SK-N-SH (cell line): ENCODE measurements at regions of chr7 and their contacts with region 1.

Region 1: GRCh38 chr7:101321491-101322401 is at the start of gene IFT22:
- DNase-seq: peak; percentile 99
- H3K4me3 ChIP-seq: peak within 1 kb of the TSS; percentile 61 to 78
- H3K27ac ChIP-seq: peak within 1 kb of the TSS; percentile 59 to 81
- H3K4me1 ChIP-seq: peaks cover 0 to 2% of the 10 kb centered on the region in 2 experiments; a peak in 2 of 4 replicates
- H3K27me3 ChIP-seq: no peaks in the 10 kb centered on the region
- CTCF ChIP-seq: peak; percentile 57
- EP300 ChIP-seq: no peak; a peak in 1 of 4 replicates
- RAD21 ChIP-seq: peak; percentile 72
- polyA plus RNA-seq, gene IFT22: 62.4 and 66.7 TPM in 2 replicates

Region 2: GRCh38 chr7:101308245-101309085 is 13.3 kb before region 1 on chr7:
- CTCF ChIA-PET with region 1: interaction called, 11 read pairs
- POLR2A ChIA-PET with region 1: interaction called, 12 read pairs
- DNase-seq: peak; percentile 80
- H3K4me3 ChIP-seq: peak overlapping the region; percentile 37 to 46; a peak in 3 of 4 replicates
- H3K27ac ChIP-seq: no peak overlapping the region
- H3K4me1 ChIP-seq: no peaks in the 10 kb centered on the region; a peak in 1 of 4 replicates
- H3K27me3 ChIP-seq: peaks cover 4% of the 10 kb centered on the region; the same call in 1 of the 2 replicates
- CTCF ChIP-seq: no peak
- EP300 ChIP-seq: no peak
- RAD21 ChIP-seq: no peak

Region 3: DNA sequence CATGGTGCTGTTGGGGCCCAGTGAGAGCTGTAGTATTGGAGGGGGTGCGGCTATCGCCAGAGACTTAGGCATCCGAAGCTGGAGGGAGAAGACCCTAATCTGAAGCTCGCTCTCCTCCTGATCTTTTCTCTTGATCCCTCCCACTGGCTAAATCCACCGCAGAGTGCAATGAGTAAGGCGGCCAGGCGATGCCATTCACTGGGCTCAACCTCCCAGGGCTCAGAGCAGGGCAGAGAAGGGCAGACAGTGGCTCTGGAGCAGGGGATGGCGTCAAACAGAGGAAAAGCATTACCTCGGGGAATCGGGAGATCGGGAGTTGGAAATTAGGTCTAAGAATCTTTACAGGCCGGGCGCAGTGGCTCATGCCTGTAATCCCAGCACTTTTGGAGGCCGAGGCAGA is 18.6 kb after region 1 on chr7:
- CTCF ChIA-PET with region 1: interaction called, 12 read pairs
- POLR2A ChIA-PET with region 1: interaction called, 3 read pairs
- DNase-seq: no peak
- H3K4me3 ChIP-seq: no peak overlapping the region
- H3K27ac ChIP-seq: no peak overlapping the region
- H3K4me1 ChIP-seq: no peaks in the 10 kb centered on the region
- H3K27me3 ChIP-seq: peaks cover 14% of the 10 kb centered on the region; the same call in 1 of the 2 replicates
- CTCF ChIP-seq: no peak
- EP300 ChIP-seq: no peak
- RAD21 ChIP-seq: no peak